ENCODE measurements at regions of chr11 and their contacts with region 1.

Region 1: DNA sequence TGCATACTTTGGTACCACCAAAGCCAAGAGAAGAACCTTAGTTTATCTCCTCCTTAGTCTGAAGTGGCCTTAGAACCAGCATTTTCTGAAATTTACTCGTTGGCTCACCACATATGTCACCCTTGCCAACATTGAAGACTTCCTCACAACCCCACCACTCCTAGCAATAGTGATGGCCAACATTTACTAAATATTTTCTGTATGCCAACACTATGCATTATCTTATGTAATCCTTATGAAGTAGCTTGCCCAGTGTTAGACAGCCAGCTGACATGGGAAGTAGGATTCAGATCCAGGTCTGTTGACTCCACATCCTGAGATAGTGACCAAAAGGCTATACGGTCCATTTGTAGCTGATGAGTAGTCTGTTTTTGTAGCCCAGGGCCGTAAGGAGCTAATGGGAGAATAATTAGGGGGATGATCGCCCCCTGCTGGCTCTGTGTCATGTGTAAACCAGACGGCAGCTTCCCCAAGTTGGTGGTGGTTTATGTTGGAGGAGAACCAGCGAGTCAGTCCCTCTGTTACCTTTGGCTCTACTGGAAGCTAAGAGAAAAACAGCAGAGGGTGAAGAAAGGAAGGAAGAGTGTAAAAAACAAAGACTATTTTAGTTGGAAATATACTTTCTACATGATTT is 120.5 kb upstream of the RASSF10 start:
- DNase-seq: no peak
- ATAC-seq: peak; percentile 94
- H3K4me3 ChIP-seq: no peak overlapping the region
- H3K27ac ChIP-seq: no peak overlapping the region
- H3K4me1 ChIP-seq: no peaks in the 10 kb centered on the region
- H3K27me3 ChIP-seq: no peaks in the 10 kb centered on the region; a peak in 1 of 4 replicates
- CTCF ChIP-seq: peak; percentile 66 to 75 (median 73); a peak in 5 of 6 replicates
- EP300 ChIP-seq: no peak
- POLR2A ChIP-seq: no peak
- RAD21 ChIP-seq: peak; percentile 72

Region 2: GRCh38 chr11:12288212-12288930 is 600.3 kb before region 1 on chr11:
- CTCF ChIA-PET with region 1: interaction called, 12 read pairs
- POLR2A ChIA-PET with region 1: no interaction called
- RAD21 ChIA-PET with region 1: interaction called, 4 read pairs
- SMC1A ChIA-PET with region 1: interaction called, 8 read pairs
- in situ Hi-C with region 1: no loop called
- intact Hi-C with region 1: no loop called
- DNase-seq: no peak
- ATAC-seq: peak; percentile 79
- H3K4me3 ChIP-seq: no peak overlapping the region
- H3K27ac ChIP-seq: no peak overlapping the region
- H3K4me1 ChIP-seq: no peaks in the 10 kb centered on the region
- H3K27me3 ChIP-seq: no peaks in the 10 kb centered on the region
- CTCF ChIP-seq: peak; percentile 68 to 93 (median 88)
- EP300 ChIP-seq: no peak
- POLR2A ChIP-seq: no peak
- RAD21 ChIP-seq: peak; percentile 65

Region 3: DNA sequence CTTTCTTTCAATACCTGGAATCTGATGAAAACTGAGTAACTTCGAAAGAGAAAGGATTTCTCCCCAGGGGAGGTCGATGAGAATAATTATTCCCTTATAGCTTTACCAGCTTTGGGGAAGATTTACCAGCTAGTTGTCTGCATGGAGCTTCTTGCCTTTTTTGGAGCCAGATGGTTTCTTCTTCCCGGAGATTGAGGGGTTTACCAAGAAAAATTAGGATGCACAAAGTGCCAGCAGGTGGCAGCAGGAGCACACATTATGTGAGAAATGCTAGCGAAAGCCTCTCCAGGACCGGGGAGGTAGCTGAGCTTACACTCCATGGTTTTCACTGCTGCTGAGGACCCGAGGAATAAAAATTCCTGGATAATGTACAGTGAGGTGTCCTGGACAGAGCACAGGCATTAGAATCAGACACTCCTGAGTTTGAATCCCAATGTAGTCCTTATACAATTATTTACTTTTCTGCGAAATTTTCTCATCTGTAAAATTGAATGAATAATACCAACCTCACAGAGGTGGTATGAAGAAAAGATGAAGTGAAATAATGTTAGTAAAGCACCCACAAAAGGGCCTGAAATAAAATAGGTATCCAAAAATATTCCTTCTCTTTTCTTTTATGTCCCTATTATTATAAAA is 557.3 kb before region 1 on chr11:
- CTCF ChIA-PET with region 1: interaction called, 91 read pairs
- POLR2A ChIA-PET with region 1: no interaction called
- RAD21 ChIA-PET with region 1: interaction called, 44 read pairs
- SMC1A ChIA-PET with region 1: interaction called, 41 read pairs
- in situ Hi-C with region 1: loop called (anchors 5 kb)
- intact Hi-C with region 1: loop called (anchors 1 kb)
- DNase-seq: peak; percentile 5
- ATAC-seq: peak; percentile 76
- H3K4me3 ChIP-seq: no peak overlapping the region
- H3K27ac ChIP-seq: no peak overlapping the region
- H3K4me1 ChIP-seq: no peaks in the 10 kb centered on the region
- H3K27me3 ChIP-seq: no peaks in the 10 kb centered on the region
- CTCF ChIP-seq: peak; percentile 67 to 84 (median 68)
- EP300 ChIP-seq: no peak
- POLR2A ChIP-seq: no peak
- RAD21 ChIP-seq: peak; percentile 81

Region 4: DNA sequence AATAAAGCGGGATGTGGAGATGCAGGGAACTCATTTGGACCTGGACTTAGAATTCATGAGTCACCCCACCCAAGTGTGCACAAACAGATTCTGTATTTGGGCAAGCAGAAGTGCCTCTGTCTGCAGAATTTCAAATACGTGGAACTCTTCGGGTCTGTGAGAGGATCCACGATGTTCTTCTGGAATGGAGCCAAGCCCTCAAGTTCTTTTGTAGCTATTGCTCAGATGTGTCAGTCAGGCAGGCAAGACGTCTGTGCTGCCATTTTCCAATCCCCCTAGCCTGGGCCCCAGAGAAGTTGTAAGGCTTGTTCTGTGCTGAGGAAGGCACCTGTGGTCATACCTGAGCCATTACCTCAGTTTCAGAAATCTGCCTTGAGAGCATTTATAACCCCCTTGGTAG is 12.3 kb before region 1 on chr11:
- CTCF ChIA-PET with region 1: interaction called, 29 read pairs
- POLR2A ChIA-PET with region 1: no interaction called
- RAD21 ChIA-PET with region 1: no interaction called
- SMC1A ChIA-PET with region 1: interaction called, 3 read pairs
- in situ Hi-C with region 1: no loop called
- intact Hi-C with region 1: no loop called
- DNase-seq: no peak
- ATAC-seq: no peak
- H3K4me3 ChIP-seq: no peak overlapping the region
- H3K27ac ChIP-seq: no peak overlapping the region
- H3K4me1 ChIP-seq: no peaks in the 10 kb centered on the region
- H3K27me3 ChIP-seq: peaks cover 1 to 3% of the 10 kb centered on the region in 2 experiments; a peak in 2 of 4 replicates
- CTCF ChIP-seq: no peak
- EP300 ChIP-seq: no peak
- POLR2A ChIP-seq: no peak
- RAD21 ChIP-seq: no peak

Measured in GM12878 (cell line).